Ascending aorta (tissue), 2 donors: ENCODE measurements at regions of chr14 and their contacts with region 1.

Region 1: GRCh38 chr14:64465191-64465822 is at the start of gene AKAP5:
- DNase-seq: peak in 1 of 2 donors; percentile 77
- H3K4me3 ChIP-seq: peak within 1 kb of the TSS; percentile 76 to 82
- H3K27ac ChIP-seq: peak within 1 kb of the TSS; percentile 78 to 79
- H3K4me1 ChIP-seq: peaks cover 0 to 3% of the 10 kb centered on the region in 2 donors
- H3K27me3 ChIP-seq: no peaks in the 10 kb centered on the region
- CTCF ChIP-seq: no peak
- total RNA-seq, gene AKAP5: 0.11 TPM

Region 2: DNA sequence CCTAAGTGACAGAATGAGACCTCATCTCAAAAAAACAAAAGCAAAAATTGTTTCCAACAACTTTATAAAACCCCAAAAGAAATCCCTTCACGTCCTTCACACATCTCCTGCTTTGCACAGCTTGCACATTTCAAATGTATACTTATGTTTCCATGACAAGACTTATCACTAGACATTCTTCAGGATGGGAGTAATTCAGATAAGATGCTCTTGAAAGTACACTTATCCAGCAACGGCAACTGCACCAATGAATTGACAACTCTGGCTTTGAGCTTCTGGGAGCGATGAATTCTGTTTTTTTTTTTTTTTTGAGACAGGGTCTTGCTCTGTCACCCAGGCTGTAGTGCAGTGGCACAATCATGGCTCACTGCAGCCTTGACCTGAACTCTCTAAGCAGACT is 30.8 kb before region 1 on chr14:
- intact Hi-C with region 1: loop called (anchors 2 kb)
- DNase-seq: no peak
- H3K4me3 ChIP-seq: no peak overlapping the region
- H3K27ac ChIP-seq: no peak overlapping the region
- H3K4me1 ChIP-seq: peaks cover 3 to 10% of the 10 kb centered on the region in 2 donors
- H3K27me3 ChIP-seq: no peaks in the 10 kb centered on the region
- CTCF ChIP-seq: no peak

Region 3: GRCh38 chr14:64444984-64445845 is 20.1 kb before region 1 on chr14:
- intact Hi-C with region 1: loop called (anchors 2 kb)
- DNase-seq: peak in 1 of 2 donors; percentile 78
- H3K4me3 ChIP-seq: no peak overlapping the region
- H3K27ac ChIP-seq: peak overlapping the region; percentile 85
- H3K4me1 ChIP-seq: peaks cover 4 to 25% of the 10 kb centered on the region in 2 donors
- H3K27me3 ChIP-seq: no peaks in the 10 kb centered on the region
- CTCF ChIP-seq: no peak